CD4-positive, alpha-beta memory T cell (primary cell): ENCODE measurements at regions of chr10 and their contacts with region 1.

Region 1: DNA sequence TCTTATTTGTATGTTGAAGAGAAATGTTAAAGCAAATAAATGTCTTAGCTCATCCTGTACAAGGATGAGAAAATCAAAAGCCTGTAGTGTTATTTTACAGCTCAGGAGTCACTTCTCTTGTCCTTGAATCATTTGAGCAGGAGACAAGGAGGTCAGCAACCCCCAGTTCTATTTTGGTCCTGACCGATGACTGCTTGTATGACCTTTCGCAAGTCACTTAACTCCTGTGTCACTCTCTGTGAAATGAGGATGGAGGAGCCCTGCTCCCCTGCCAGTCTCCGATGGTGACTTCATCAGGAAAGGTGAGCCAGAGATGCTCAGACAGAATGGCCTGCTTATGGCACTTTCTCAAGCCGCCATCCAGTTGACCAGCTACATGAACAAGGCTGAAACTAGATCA is 101.0 kb downstream of the CELF2 start:
- DNase-seq: no peak
- H3K4me3 ChIP-seq: no peak overlapping the region
- H3K4me3 Mint-ChIP-seq: no peak overlapping the region
- H3K27ac ChIP-seq: no peak overlapping the region
- H3K27ac Mint-ChIP-seq: no peak overlapping the region
- H3K4me1 ChIP-seq: peaks cover 5% of the 10 kb centered on the region
- H3K4me1 Mint-ChIP-seq: peaks cover 13 to 27% (median 16%) of the 10 kb centered on the region in 4 donors
- H3K27me3 ChIP-seq: no peaks in the 10 kb centered on the region
- H3K27me3 Mint-ChIP-seq: no peaks in the 10 kb centered on the region

Region 2: GRCh38 chr10:10786109-10787090 is 332.3 kb before region 1 on chr10:
- CTCF ChIA-PET with region 1: no interaction called
- POLR2A ChIA-PET with region 1: no interaction called
- intact Hi-C with region 1: no loop called
- DNase-seq: no peak
- H3K4me3 ChIP-seq: no peak overlapping the region
- H3K4me3 Mint-ChIP-seq: no peak overlapping the region
- H3K27ac ChIP-seq: no peak overlapping the region
- H3K27ac Mint-ChIP-seq: no peak overlapping the region
- H3K4me1 ChIP-seq: no peaks in the 10 kb centered on the region
- H3K4me1 Mint-ChIP-seq: peaks cover 0 to 2% (median 0%) of the 10 kb centered on the region in 4 donors
- H3K27me3 ChIP-seq: no peaks in the 10 kb centered on the region
- H3K27me3 Mint-ChIP-seq: peaks cover 6 to 14% of the 10 kb centered on the region in 2 donors

Region 3: GRCh38 chr10:11270135-11270857 is 151.6 kb after region 1 on chr10:
- CTCF ChIA-PET with region 1: interaction called, 61 read pairs
- POLR2A ChIA-PET with region 1: interaction called, 8 read pairs
- intact Hi-C with region 1: loop called (anchors 1 kb)
- DNase-seq: peak; percentile 55 to 66 (median 65)
- H3K4me3 ChIP-seq: no peak overlapping the region
- H3K4me3 Mint-ChIP-seq: peak overlapping the region; percentile 2 to 44 (median 11)
- H3K27ac ChIP-seq: no peak overlapping the region
- H3K27ac Mint-ChIP-seq: peak overlapping the region; percentile 48 to 89 (median 82)
- H3K4me1 ChIP-seq: peaks cover 41% of the 10 kb centered on the region
- H3K4me1 Mint-ChIP-seq: peaks cover 45 to 84% (median 65%) of the 10 kb centered on the region in 4 donors
- H3K27me3 ChIP-seq: no peaks in the 10 kb centered on the region
- H3K27me3 Mint-ChIP-seq: no peaks in the 10 kb centered on the region